Common myeloid progenitor, CD34-positive (primary cell): ENCODE measurements at regions of chr4 and their contacts with region 1.

Region 1: DNA sequence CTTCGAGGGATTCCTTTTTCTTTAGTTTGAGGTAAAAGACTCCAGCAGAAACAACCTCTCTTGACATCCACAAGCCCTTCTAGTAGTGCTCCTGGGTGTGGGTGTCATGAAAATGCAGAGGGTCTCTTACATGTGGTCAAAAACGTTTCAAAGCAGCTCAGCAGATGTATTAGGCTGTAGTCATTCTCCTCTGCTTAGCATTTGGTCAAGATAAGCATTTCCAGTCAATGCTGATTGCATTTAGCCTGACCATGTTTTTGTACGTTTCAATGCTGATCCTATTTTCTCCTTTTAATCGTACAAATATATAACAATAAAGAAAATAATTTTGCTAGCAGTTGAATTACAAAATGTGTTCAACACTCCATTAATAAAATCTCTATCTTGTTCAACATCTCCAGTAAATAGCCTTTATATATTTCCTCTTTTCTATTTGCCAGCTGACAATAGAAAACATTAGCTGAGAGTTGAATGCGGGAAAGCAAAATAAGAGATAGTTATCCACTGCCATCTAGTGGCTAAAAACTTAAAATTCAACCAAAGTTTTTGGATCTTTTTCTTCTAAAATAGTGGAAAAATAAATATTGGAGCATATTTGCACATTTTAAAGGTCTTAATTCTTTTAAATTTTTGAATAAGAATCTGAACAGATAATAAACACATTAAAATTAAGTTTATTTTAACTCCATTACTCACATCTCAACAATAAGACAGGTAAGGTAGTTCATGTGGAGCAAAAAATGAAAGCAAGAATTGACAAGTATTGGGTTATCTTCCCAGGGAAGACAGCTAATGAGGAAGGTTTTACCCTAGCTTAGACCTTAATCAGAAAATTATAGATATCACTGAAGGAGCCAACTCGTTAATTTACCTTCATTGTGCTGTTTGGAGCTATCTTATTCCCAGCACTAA is 15.2 kb upstream of the PACRGL start:
- DNase-seq: peak; percentile 25 to 62 (median 53)
- H3K4me3 ChIP-seq: no peak overlapping the region
- H3K27ac ChIP-seq: no peak overlapping the region
- H3K4me1 ChIP-seq: no peaks in the 10 kb centered on the region
- H3K27me3 ChIP-seq: peaks cover under 1 to 12% (median 3%) of the 10 kb centered on the region in 5 experiments

Region 2: GRCh38 chr4:20418861-20419451 is 266.2 kb before region 1 on chr4:
- CTCF ChIA-PET with region 1: interaction called, 15 read pairs
- POLR2A ChIA-PET with region 1: no interaction called
- DNase-seq: peak; percentile 70 to 79 (median 73)
- H3K4me3 ChIP-seq: peak overlapping the region in 5 of 7 experiments; percentile 11 to 76 (median 48)
- H3K27ac ChIP-seq: peak overlapping the region in 1 of 2 experiments; percentile 36
- H3K4me1 ChIP-seq: peaks cover 0 to 3% (median 0%) of the 10 kb centered on the region in 4 experiments
- H3K27me3 ChIP-seq: peaks cover 0 to 1% (median 0%) of the 10 kb centered on the region in 5 experiments

Region 3: DNA sequence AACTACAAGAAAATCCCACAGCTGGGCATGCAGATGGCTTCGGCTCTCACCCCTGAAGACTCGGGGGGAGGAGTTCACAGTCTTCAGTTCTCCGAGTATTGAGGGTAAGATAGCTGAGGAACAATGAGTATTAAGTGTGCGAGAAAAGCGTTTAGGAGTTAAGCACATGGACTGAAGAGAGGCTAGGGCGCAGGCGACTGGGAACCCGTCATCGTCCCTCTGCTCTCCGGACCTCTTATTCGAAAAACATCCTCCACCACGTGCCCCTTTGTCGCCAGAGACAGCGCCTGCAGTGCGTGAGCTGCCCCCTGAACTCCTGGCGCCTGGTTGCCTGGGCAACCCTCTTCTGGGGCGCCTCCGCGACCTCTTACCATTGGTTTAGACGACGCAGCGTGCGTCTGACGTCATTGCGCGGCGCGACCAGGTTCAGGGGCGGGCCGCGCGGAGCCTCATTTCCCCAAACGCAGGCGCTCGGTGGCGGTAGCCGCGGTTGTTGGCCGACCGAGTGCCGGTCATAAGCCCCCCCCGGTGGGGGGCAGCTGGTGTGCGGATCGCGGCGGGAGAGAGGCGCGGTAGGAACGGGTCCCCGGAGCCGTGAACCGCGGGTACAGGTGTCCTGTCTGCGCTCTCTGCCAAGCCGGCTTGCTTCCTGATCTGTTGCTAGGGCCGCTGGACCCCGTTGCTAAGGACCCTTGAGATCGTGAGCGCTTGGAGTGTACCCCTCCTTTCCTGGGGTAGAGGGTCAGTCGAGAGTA is 15.1 kb after region 1 on chr4 and contains the start of gene PACRGL:
- CTCF ChIA-PET with region 1: interaction called, 32 read pairs
- POLR2A ChIA-PET with region 1: interaction called, 3 read pairs
- DNase-seq: peak; percentile 95 to 98 (median 97)
- H3K4me3 ChIP-seq: peak within 1 kb of the TSS; percentile 63 to 96 (median 92)
- H3K27ac ChIP-seq: peak within 1 kb of the TSS; percentile 70 to 81
- H3K4me1 ChIP-seq: peaks cover 4 to 21% (median 18%) of the 10 kb centered on the region in 4 experiments
- H3K27me3 ChIP-seq: peaks cover 0 to 2% (median 0%) of the 10 kb centered on the region in 5 experiments